Body of pancreas (tissue), 4 donors: ENCODE measurements at regions of chr1 and their contacts with region 1.

Region 1: DNA sequence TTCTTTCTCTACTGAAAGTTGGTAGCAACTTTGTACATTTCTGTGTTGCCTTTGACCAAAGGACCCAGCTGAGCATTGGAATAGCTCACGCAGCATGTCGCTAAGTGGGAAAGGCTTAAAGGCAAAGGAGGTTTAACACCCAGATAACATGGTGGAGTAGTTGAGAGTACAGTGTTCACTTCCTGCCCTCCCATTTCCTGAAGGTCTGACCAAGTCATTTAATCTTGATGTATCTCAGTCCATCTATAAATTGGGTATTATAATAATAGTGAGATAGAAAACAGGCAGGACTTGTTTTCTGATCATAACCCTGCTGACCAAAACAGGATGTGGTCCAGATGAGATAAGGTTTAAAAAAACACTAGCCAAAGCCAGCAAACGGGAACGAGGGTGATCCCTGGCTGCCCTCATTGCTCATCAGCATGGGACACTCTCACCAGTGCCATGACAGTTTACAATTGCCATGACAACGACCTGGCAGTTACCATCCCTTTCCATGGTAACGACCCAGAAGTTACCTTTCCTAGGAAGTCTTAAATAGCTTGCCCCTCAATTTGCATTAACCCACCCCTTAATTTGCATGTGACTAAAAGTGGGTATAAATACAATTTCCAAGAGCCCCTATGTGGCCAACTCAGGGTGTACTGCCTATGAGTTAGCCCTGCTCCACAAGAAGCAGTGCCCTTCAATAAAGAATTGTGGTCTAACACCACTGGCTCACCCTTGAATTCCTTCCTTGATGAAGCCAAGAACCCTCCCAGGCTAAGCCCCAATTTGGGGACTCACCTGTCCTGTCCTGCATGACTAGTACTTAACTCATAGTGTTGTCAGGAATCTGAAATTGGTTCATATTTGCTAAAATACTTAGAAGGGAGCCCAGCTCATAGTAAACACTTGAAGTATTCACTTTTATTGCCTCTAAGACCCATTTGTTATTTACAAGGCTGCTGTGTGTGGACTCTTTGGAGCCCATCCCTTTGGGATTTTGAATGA is 28.4 kb upstream of the FHAD1 start:
- DNase-seq: peak in 2 of 4 donors; percentile 28 to 35
- ATAC-seq: peak; percentile 43
- H3K4me3 ChIP-seq: no peak overlapping the region
- H3K27ac ChIP-seq: no peak overlapping the region
- H3K4me1 ChIP-seq: peaks cover 25% of the 10 kb centered on the region
- H3K27me3 ChIP-seq: no peaks in the 10 kb centered on the region
- CTCF ChIP-seq: no peak
- POLR2A ChIP-seq: no peak

Region 2: GRCh38 chr1:15261155-15262002 is 42.8 kb after region 1 on chr1:
- intact Hi-C with region 1: loop called (anchors 10 kb)
- DNase-seq: peak; percentile 38 to 85 (median 62)
- ATAC-seq: peak; percentile 67
- H3K4me3 ChIP-seq: no peak overlapping the region
- H3K27ac ChIP-seq: peak overlapping the region in 3 of 4 donors; percentile 31 to 64 (median 53)
- H3K4me1 ChIP-seq: peaks cover 23% of the 10 kb centered on the region
- H3K27me3 ChIP-seq: no peaks in the 10 kb centered on the region
- CTCF ChIP-seq: no peak
- POLR2A ChIP-seq: peak in 2 of 3 donors; percentile 31 to 40